ENCODE measurements at regions of chr20 and their contacts with region 1.

Region 1: DNA sequence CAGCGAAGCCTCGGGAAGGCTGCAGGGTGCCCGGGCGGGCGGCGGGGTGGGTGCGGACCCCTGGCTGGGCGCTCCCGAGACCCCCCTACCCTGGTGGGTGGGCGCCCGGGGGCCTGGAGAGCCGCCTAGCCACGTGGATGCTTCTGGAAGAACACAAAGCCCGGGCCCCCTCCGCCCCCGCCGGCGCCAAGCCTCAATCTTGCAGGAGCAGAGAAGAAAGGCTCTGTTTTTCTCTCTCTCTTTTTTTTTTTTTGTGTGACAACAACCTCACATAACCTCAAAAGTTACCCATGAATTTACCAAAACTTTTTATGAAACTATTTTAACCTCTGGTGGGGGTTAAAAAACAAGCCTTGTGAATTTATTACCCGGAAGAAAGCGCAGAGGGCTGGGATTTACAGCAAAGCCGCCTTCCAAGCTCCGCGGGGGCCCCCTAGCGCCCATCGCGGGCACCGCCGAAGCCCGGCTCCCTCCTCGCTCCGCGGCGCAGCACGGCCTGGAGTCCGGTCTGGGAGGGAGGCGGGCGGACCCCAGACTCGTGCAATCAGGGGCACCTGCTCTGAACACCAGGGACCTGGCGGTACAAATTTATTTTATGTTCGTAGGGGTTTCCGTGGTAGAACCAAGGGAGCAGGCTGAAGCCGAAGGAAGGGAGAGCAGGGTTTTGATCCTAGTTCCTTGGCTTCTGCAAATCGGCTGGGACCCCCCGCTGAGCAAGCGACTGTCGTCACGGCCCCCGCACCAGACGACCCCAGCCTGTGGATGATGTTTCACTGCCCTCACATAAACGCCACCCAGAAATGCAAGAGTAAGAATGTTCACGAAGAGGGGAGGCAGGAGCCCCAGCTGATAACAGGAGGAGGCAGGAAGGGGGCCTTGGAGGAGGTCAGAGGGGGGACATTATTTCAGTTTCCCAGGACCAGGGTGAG is 58.9 kb downstream of the ZNF831 start:
- DNase-seq: peak; percentile 53 to 84 (median 75)
- H3K4me3 ChIP-seq: peak overlapping the region; percentile 45
- H3K27ac ChIP-seq: no peak overlapping the region
- H3K4me1 ChIP-seq: peaks cover 2% of the 10 kb centered on the region
- H3K27me3 ChIP-seq: no peaks in the 10 kb centered on the region
- CTCF ChIP-seq: peak; percentile 72 to 76 (median 74)
- EP300 ChIP-seq: no peak
- POLR2A ChIP-seq: no peak

Region 2: GRCh38 chr20:58236612-58237330 is 985.7 kb before region 1 on chr20:
- intact Hi-C with region 1: loop called in 2 of 4 experiments (anchors 5 to 10 kb)
- DNase-seq: peak; percentile 54 to 84 (median 76)
- H3K4me3 ChIP-seq: peak overlapping the region; percentile 8
- H3K27ac ChIP-seq: no peak overlapping the region
- H3K4me1 ChIP-seq: no peaks in the 10 kb centered on the region
- H3K27me3 ChIP-seq: no peaks in the 10 kb centered on the region
- CTCF ChIP-seq: peak; percentile 77 to 87 (median 84)
- EP300 ChIP-seq: no peak
- POLR2A ChIP-seq: peak; percentile 10

Region 3: GRCh38 chr20:58870239-58871014 is 352.1 kb before region 1 on chr20:
- intact Hi-C with region 1: loop called (anchors 1 to 10 kb)
- DNase-seq: peak; percentile 59 to 79 (median 76)
- H3K4me3 ChIP-seq: no peak overlapping the region
- H3K27ac ChIP-seq: no peak overlapping the region
- H3K4me1 ChIP-seq: peaks cover 3% of the 10 kb centered on the region
- H3K27me3 ChIP-seq: no peaks in the 10 kb centered on the region
- CTCF ChIP-seq: peak; percentile 58 to 71 (median 68)
- EP300 ChIP-seq: no peak
- POLR2A ChIP-seq: no peak

Region 4: GRCh38 chr20:59087829-59088433 is 134.6 kb before region 1 on chr20:
- intact Hi-C with region 1: loop called in 1 of 4 experiments (anchors 5 kb)
- DNase-seq: peak; percentile 15 to 71 (median 49)
- H3K4me3 ChIP-seq: no peak overlapping the region
- H3K27ac ChIP-seq: no peak overlapping the region
- H3K4me1 ChIP-seq: no peaks in the 10 kb centered on the region
- H3K27me3 ChIP-seq: no peaks in the 10 kb centered on the region
- CTCF ChIP-seq: peak in 1 of 3 donors; percentile 22
- EP300 ChIP-seq: no peak
- POLR2A ChIP-seq: no peak

Region 5: DNA sequence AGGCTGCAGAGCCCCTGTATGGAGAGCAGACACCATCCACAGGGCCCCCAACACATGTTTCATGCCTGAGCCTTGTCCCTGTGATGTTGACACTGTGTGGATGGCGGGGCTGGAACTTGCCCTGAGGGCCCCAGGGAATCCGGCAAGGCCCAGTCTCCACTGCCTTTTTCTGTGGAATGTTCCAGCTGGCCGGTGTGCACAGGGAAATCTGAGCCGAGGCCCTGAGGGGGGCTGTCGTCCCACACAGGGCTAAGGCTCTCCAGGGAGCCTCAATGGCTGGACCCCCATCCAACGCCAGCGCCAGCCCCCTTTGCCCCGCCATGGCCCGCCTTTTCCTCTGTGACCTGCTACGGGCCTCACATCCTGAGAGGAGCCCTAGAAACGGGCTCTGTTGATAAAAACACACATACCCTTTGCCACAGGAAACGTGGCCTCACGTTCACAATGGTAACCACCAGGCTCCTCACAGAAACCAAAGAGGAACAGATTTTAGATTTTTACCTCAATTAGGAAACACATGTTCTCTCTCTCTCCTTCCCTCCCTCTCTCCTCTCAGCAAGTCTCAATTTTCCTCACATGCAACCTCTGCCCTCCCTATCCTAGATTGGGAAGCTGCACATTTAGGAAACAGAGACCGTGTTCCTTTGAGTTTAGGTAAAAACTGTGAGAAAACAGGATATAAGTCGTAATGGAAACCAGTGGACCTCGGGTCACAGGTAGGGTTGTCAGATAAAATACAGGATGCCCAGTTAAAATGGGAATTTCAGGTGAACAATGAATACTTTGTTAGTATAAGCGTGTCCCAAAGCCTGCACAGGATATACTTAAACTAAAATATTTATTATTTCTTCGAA is 72.6 kb before region 1 on chr20:
- intact Hi-C with region 1: loop called in 1 of 4 experiments (anchors 10 kb)
- DNase-seq: peak in 1 of 5 donors; percentile 31
- H3K4me3 ChIP-seq: no peak overlapping the region
- H3K27ac ChIP-seq: no peak overlapping the region
- H3K4me1 ChIP-seq: no peaks in the 10 kb centered on the region
- H3K27me3 ChIP-seq: no peaks in the 10 kb centered on the region
- CTCF ChIP-seq: no peak
- EP300 ChIP-seq: no peak
- POLR2A ChIP-seq: no peak